GM12878 (cell line): ENCODE measurements at regions of chr5 and their contacts with region 1.

Region 1: DNA sequence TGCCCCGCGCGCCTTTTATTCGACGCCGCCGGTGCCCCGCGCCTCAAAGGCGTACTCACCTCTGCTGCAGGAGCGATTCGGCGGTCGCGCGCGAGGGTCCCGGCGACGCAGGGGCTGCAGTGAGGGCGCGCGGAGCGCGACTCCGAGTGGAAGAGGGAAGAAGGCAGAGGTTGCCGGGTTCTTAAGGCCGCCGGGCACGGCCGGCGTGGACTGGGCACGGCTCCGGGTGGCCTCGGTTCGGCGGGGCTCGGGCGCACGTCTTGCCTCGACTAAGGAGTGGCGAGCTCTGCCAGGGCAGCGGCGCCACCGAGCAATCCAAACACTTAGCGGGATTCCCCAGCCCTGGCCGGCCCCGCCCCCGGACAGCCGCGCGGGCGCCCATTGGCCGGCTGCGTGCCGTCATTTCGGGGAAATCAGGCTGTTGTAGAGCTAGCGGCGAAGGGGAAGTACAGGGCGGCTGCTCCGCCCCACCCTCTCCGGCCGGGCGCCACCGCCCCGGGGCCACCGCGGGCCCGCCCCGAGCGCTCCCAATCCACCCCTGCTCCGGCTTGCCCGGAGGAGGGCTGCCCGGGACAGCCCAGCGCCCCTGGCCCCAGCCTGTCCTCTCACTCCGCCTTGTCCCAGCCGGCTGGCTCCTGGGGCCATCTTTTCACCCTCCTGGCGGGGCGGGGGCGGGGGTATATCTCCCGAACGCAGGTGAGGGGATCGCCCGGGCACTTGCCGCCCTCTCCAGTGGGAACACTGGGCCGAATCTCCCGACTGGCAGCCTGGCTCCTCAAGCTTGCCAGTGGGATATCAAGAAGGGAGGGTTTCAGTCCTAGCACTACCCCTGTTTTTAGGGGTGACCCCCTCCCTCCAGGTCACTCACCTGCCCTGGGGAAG is at the start of gene IRF1:
- DNase-seq: no peak
- ATAC-seq: peak; percentile 80
- H3K4me3 ChIP-seq: peak within 1 kb of the TSS; percentile 98
- H3K27ac ChIP-seq: peak within 1 kb of the TSS; percentile 97
- H3K4me1 ChIP-seq: peaks cover 52% of the 10 kb centered on the region
- H3K27me3 ChIP-seq: no peaks in the 10 kb centered on the region
- CTCF ChIP-seq: 0 out of 6 replicates have a peak, but pooled peaks of 2 of the 3 experiments have one; percentile 3 to 7
- EP300 ChIP-seq: 0 out of 4 replicates have a peak, but pooled peaks of 1 of the 2 experiments have one; percentile 1
- POLR2A ChIP-seq: peak; percentile 94
- RAD21 ChIP-seq: 0 out of 2 replicates have a peak, but pooled peaks have one; percentile 0
- polyA plus RNA-seq, gene IRF1: 6.9 to 14.0 TPM

Region 2: GRCh38 chr5:132410451-132411381 is 80.0 kb before region 1 on chr5:
- CTCF ChIA-PET with region 1: interaction called, 17 read pairs
- POLR2A ChIA-PET with region 1: interaction called, 57 read pairs
- RAD21 ChIA-PET with region 1: interaction called, 121 read pairs
- SMC1A ChIA-PET with region 1: interaction called, 98 read pairs
- in situ Hi-C with region 1: no loop called
- intact Hi-C with region 1: no loop called
- DNase-seq: no peak
- ATAC-seq: peak; percentile 68
- H3K4me3 ChIP-seq: peak overlapping the region; percentile 89
- H3K27ac ChIP-seq: peak overlapping the region; percentile 95
- H3K4me1 ChIP-seq: peaks cover 11% of the 10 kb centered on the region
- H3K27me3 ChIP-seq: no peaks in the 10 kb centered on the region
- CTCF ChIP-seq: peak; percentile 54 to 67 (median 61)
- EP300 ChIP-seq: peak in 1 of 2 experiments; percentile 39; a peak in 1 of 4 replicates
- POLR2A ChIP-seq: peak; percentile 90
- RAD21 ChIP-seq: peak; percentile 51; the same call in 1 of the 2 replicates

Region 3: GRCh38 chr5:132426525-132427138 is 64.1 kb before region 1 on chr5:
- CTCF ChIA-PET with region 1: interaction called, 184 read pairs
- POLR2A ChIA-PET with region 1: interaction called, 389 read pairs
- RAD21 ChIA-PET with region 1: interaction called, 453 read pairs
- SMC1A ChIA-PET with region 1: interaction called, 162 read pairs
- in situ Hi-C with region 1: no loop called
- intact Hi-C with region 1: loop called (anchors 1 kb)
- DNase-seq: no peak
- ATAC-seq: peak; percentile 62
- H3K4me3 ChIP-seq: peak overlapping the region; percentile 49
- H3K27ac ChIP-seq: peak overlapping the region; percentile 94
- H3K4me1 ChIP-seq: peaks cover 90% of the 10 kb centered on the region
- H3K27me3 ChIP-seq: no peaks in the 10 kb centered on the region
- CTCF ChIP-seq: peak; percentile 47 to 56 (median 52)
- EP300 ChIP-seq: peak; percentile 17 to 67; a peak in 3 of 4 replicates
- POLR2A ChIP-seq: peak; percentile 88
- RAD21 ChIP-seq: peak; percentile 42; the same call in 1 of the 2 replicates

Region 4: GRCh38 chr5:132456296-132457001 is 34.3 kb before region 1 on chr5:
- CTCF ChIA-PET with region 1: interaction called, 25 read pairs
- POLR2A ChIA-PET with region 1: interaction called, 73 read pairs
- RAD21 ChIA-PET with region 1: interaction called, 89 read pairs
- SMC1A ChIA-PET with region 1: interaction called, 85 read pairs
- in situ Hi-C with region 1: no loop called
- intact Hi-C with region 1: loop called (anchors 5 kb)
- DNase-seq: peak; percentile 73
- ATAC-seq: peak; percentile 78
- H3K4me3 ChIP-seq: peak overlapping the region; percentile 2; the same call in 1 of the 2 replicates
- H3K27ac ChIP-seq: peak overlapping the region; percentile 89
- H3K4me1 ChIP-seq: peaks cover 63% of the 10 kb centered on the region
- H3K27me3 ChIP-seq: no peaks in the 10 kb centered on the region
- CTCF ChIP-seq: no peak
- EP300 ChIP-seq: peak in 1 of 2 experiments; percentile 23; a peak in 1 of 4 replicates
- POLR2A ChIP-seq: no peak
- RAD21 ChIP-seq: no peak

Region 5: DNA sequence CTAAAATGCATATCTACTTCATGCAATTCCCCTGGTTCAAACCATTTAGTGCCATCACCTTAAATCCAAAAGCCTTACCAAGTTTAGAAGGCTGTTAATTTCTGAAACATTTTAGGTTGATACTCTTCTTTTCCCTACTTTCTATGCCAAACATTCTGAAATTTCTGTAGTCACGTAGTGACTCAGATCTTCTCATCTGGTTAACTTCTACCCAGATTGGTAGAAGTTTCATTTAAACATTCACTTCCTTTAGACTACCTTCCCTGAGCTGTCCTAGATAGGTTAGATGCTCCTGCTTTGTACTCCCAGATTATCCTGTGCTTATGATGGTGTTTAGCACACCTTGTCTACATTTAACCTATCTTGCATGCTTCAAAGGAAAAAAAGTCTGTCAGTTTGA is 75.9 kb after region 1 on chr5:
- CTCF ChIA-PET with region 1: no interaction called
- POLR2A ChIA-PET with region 1: no interaction called
- RAD21 ChIA-PET with region 1: no interaction called
- SMC1A ChIA-PET with region 1: no interaction called
- in situ Hi-C with region 1: no loop called
- intact Hi-C with region 1: no loop called
- DNase-seq: no peak
- ATAC-seq: no peak
- H3K4me3 ChIP-seq: no peak overlapping the region
- H3K27ac ChIP-seq: no peak overlapping the region
- H3K4me1 ChIP-seq: no peaks in the 10 kb centered on the region
- H3K27me3 ChIP-seq: no peaks in the 10 kb centered on the region
- CTCF ChIP-seq: no peak
- EP300 ChIP-seq: no peak
- POLR2A ChIP-seq: no peak
- RAD21 ChIP-seq: no peak